ENCODE measurements at regions of chr2 and their contacts with region 1.

Region 1: DNA sequence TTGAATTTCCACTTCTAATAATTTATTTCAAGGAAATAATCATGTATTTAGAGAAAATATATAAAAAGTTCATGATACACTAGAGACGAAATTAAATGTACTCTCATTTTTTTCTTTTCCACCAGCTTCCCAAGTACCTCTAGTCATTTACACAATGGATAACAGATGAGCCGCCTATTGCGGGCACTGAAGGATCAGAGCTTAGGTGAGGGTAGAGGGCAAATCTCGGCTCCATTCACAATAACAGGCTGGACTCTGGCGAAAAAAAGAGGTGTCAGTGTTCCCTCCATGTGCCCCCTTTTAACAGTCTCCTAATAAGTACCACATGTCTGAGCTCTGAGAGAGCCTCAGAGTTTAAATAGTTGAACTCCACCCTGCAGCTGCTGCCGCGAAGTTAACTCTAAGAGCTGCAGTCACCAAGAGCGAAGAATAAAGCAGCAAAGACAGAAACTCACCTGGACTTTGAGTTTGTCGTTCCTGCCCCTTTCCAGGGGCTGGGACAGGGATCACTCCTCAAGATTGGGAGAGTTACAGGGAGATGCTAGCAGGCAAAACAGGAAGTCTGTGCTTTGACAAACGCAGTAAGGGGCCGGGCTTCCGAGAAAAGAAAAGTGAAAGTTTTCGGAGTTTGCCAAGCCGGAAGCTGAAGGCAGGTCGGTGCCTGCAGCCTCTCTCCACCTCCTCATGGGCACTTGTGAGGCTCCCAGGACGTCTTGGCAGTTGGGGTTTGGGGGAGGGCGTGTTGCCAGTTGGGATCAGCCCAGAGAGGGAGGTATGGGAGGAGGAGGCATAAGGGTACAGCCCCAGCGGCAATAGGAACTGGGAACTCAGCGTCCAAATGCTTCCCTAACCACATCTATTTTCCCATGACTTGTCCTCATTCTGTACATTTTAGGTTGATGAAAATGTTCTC is at the start of gene SP110:
- DNase-seq: peak; percentile 80
- ATAC-seq: peak; percentile 88
- H3K4me3 Mint-ChIP-seq: peak within 1 kb of the TSS; percentile 99
- H3K27ac Mint-ChIP-seq: peak within 1 kb of the TSS; percentile 99
- H3K4me1 Mint-ChIP-seq: peaks cover 53% of the 10 kb centered on the region
- H3K27me3 Mint-ChIP-seq: no peaks in the 10 kb centered on the region
- total RNA-seq, gene SP110: 153 to 158 TPM

Region 2: DNA sequence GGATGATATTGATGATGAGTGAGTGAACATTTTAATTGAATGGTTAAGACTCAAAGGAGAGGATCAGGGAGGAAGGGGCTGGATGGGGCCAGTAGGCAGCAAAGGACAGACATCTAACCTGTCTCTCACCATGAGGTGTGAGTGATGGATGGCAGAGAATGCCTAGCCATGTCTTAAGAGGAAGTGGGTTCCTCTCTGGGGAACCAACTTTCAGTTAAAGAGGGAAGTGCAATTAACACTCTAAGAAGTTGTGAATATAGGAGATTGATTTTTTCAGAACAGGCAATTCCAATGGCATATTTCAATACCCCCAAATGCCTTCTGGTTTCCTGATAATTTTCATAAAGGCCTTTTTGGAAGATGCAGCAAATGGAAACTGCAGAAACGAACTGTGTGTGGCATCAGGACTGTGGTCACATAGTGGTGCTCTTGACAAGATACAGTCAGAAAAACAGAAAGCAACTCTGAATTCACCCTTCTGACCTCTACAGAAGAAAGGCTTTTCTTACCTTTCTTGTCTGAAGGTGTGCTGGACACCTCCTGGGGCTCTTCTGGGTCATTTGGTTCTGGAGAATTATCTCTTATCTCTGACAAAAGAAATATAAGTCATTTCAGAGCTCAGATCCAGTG is 10.1 kb before region 1 on chr2:
- POLR2A ChIA-PET with region 1: interaction called, 16 read pairs
- DNase-seq: no peak
- ATAC-seq: peak; percentile 70
- H3K4me3 Mint-ChIP-seq: no peak overlapping the region
- H3K27ac Mint-ChIP-seq: no peak overlapping the region
- H3K4me1 Mint-ChIP-seq: peaks cover 39% of the 10 kb centered on the region
- H3K27me3 Mint-ChIP-seq: no peaks in the 10 kb centered on the region

Region 3: GRCh38 chr2:230254152-230254881 is 34.6 kb after region 1 on chr2:
- POLR2A ChIA-PET with region 1: interaction called, 13 read pairs
- DNase-seq: no peak
- ATAC-seq: peak; percentile 79
- H3K4me3 Mint-ChIP-seq: no peak overlapping the region
- H3K27ac Mint-ChIP-seq: no peak overlapping the region
- H3K4me1 Mint-ChIP-seq: peaks cover 13% of the 10 kb centered on the region
- H3K27me3 Mint-ChIP-seq: no peaks in the 10 kb centered on the region

Region 4: GRCh38 chr2:230319211-230319862 is 99.7 kb after region 1 on chr2:
- POLR2A ChIA-PET with region 1: interaction called, 46 read pairs
- DNase-seq: peak; percentile 72
- ATAC-seq: peak; percentile 94
- H3K4me3 Mint-ChIP-seq: peak overlapping the region; percentile 80
- H3K27ac Mint-ChIP-seq: peak overlapping the region; percentile 94
- H3K4me1 Mint-ChIP-seq: peaks cover 51% of the 10 kb centered on the region
- H3K27me3 Mint-ChIP-seq: no peaks in the 10 kb centered on the region

Region 5: DNA sequence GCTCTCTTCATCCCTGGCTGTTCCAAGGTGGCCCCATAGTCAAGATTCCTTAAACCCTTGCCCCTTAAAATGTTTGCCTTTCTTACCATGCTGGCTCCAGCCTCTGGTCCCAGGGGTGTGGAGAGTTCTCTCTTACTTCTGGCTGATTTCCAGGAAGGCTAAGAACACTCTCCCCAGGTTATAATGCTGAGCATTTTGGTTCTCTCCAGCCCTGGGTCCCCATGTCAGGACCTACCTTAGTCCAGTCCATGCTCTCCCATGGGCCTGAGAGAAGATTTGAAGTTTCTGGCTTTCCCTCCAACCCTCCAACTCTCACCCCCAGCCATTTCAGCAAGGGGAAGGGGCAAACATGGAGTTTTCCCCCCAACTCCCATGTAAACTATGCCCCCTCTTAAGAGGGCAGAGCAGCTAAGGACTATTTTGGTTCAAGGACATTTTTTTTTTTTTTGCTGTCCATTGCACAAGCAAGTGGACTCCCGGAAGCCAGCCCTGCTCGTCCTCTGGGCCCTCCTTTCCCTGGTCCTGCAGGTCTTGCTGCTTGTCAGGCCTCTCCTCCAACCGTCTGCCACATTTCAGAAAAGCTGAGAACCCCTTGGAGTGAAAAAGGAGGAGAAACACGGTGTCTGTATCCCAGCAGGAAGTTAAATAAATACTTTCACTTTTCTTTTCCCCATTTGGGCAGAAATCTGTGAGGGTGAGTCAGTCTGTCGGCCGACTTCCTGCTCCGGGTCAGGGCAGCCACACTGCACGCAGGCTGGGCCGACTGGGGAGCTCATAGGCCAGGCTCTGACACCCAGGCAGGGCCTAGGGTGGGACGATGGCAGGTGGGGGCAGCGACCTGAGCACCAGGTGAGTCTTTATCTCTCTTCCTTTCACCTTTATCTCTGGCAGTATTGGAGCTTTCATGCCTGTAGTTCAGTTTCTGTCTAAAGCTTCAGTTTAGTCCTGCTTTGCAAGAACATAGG is 107.1 kb after region 1 on chr2 and contains the start of gene SP140L:
- POLR2A ChIA-PET with region 1: interaction called, 56 read pairs
- DNase-seq: peak; percentile 85
- ATAC-seq: peak; percentile 99
- H3K4me3 Mint-ChIP-seq: peak within 1 kb of the TSS; percentile 97
- H3K27ac Mint-ChIP-seq: peak within 1 kb of the TSS; percentile 98
- H3K4me1 Mint-ChIP-seq: peaks cover 48% of the 10 kb centered on the region
- H3K27me3 Mint-ChIP-seq: no peaks in the 10 kb centered on the region
- total RNA-seq, gene SP140L: 107 to 115 TPM

Region 6: DNA sequence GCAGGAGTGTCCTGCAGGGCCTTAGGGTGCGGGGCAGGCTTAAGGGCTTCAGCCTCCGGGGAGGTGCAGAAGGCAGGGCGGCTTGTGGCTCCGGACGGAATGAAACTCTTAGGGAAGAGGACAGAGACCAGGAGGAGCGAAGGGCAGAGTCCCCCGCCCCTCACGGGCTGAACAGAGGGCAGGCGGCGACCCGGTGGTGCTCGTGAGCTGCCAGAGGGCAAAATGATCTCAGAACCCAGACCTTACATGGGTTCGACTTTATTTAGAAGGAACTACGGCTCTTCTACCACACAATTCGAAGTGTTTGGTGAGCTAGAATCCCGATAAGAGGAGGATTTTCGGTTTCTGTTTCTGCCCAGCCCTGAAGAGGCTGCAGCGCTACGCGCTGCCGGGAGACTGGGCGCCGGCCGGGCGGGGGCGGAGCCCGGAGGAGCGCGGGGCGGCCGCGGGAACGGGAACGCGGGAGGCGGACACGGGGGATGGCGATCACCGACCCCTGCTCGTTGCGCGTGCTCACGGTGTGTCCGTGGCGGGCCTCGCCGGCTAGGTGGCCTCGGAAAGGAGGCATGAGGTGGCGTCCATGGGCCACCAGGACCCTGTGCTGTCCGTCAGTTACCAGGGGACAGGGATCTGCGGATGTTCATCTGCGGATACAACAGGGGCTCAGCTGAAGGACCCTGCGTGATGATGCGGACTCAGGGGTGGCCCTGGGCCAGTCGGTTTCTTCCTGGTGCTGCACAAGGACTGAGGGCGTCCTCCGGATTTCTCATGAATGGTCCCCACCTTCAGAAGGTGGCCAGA is 192.1 kb after region 1 on chr2:
- POLR2A ChIA-PET with region 1: interaction called, 27 read pairs
- DNase-seq: peak; percentile 82
- ATAC-seq: peak; percentile 69
- H3K4me3 Mint-ChIP-seq: peak overlapping the region; percentile 98
- H3K27ac Mint-ChIP-seq: peak overlapping the region; percentile 100
- H3K4me1 Mint-ChIP-seq: peaks cover 62% of the 10 kb centered on the region
- H3K27me3 Mint-ChIP-seq: no peaks in the 10 kb centered on the region